Tibial artery (tissue), 4 donors: ENCODE measurements at regions of chr16 and their contacts with region 1.

Region 1: GRCh38 chr16:20866145-20866772 is 33.9 kb downstream of the DCUN1D3 start:
- DNase-seq: peak; percentile 38 to 82
- H3K4me3 ChIP-seq: peak overlapping the region in 1 of 2 donors; percentile 40
- H3K27ac ChIP-seq: peak overlapping the region; percentile 71 to 74
- H3K4me1 ChIP-seq: peaks cover 0 to 98% (median 78%) of the 10 kb centered on the region in 4 donors
- H3K27me3 ChIP-seq: no peaks in the 10 kb centered on the region
- CTCF ChIP-seq: no peak

Region 2: DNA sequence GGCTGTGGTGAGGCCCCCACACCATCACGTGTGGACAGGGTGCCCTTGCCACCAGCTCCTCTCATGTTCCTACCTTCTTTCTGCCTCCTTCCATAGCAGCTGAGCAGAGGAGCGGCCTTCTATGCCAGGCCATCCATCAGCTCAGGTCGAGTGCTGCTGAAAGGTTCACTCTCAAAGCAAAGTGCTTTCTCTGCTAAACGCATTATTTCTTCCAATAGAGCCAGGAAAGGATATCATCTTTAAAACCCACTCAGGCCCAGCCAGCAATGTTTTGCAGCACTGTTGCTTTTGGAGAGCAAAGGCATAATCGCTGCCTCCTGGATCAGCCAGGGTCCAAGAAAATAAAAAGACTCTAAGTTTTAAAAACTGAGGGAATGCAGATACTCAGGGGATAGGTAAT is 926.7 kb before region 1 on chr16:
- intact Hi-C with region 1: no loop called
- DNase-seq: no peak
- H3K4me3 ChIP-seq: no peak overlapping the region
- H3K27ac ChIP-seq: no peak overlapping the region
- H3K4me1 ChIP-seq: no peaks in the 10 kb centered on the region
- H3K27me3 ChIP-seq: no peaks in the 10 kb centered on the region
- CTCF ChIP-seq: no peak

Region 3: DNA sequence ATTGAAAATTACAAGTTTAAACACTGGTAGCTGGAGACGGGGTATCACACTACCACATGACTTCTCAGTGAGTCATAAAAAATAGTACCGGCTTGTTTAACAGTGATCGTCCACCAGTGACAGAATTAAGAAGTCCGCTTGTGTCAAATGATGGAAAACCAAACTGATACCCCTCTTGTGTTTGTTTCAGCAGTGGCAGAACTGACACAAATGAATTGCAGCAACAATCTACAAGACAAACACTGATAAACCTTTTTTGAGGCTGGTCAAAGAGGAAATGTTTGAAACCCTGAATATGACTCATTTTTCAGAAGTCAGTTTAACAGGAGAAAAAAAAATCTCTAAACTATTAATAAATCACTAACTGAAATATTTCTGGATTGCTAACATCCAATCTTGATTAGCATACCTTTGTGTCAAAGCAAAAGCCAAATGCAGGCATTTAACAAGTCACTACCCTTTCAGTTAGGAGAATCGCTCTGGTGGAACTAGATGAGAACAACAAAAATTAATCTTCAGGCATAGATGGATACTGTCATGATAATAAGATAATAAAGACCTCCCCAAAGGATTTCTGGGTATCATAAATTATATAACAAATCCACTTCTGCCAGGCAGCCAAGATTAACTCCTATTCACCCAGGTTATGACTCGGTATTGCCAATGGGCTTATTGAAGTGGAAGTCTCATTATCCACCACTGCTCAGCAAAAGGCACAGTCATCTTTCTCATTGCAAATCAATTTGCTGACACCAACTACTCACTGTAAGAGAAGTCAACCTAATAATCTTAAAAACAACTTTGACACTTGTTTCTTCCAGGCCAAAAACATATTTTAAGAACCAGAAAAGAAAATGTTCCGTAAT is 13.1 kb after region 1 on chr16:
- intact Hi-C with region 1: loop called (anchors 2 kb)
- DNase-seq: no peak
- H3K4me3 ChIP-seq: peak overlapping the region in 1 of 2 donors; percentile 25
- H3K27ac ChIP-seq: peak overlapping the region; percentile 76 to 81
- H3K4me1 ChIP-seq: peaks cover 0 to 87% (median 63%) of the 10 kb centered on the region in 4 donors
- H3K27me3 ChIP-seq: no peaks in the 10 kb centered on the region
- CTCF ChIP-seq: peak in 1 of 2 experiments; percentile 3

Region 4: DNA sequence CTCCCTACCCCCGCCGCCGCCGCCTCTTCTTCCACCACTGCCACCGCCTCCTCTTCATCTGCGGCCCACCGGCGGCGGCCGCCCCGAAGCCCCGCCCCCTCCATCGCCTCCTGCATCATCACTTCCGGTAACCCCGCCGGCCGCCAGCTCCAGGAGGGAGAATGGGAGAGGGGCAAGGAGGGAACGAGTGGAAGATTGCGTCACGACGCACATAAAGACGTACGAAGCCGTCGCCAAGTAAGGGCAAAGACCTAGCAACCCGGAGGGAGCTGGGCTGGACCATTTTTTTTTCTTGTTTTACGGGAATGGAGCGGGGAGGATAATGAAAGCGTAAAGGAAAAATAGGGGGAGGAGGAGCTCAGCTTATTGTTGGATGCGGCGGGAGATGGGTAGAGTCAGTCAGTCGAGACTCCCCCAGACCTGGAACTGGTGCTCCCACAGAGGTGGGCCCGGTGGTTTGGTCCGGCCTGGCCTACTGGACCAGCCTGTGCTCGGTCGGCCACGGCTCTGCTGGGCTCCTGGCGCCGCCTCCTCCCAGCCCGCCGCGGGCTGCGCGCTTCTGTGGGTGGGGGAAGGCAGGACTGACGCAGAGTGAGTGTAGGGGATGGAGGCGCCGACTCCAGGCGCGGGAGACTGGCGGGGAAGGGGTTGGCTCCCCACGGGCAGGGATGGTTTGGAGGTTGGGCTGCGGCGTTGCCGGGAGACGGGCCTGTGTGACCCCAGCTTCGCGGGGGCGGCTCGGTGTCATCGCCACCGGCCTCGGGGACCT is 34.2 kb after region 1 on chr16 and contains the starts of genes DCUN1D3 and LYRM1:
- intact Hi-C with region 1: loop called (anchors 5 kb)
- DNase-seq: peak; percentile 99
- H3K4me3 ChIP-seq: peak within 1 kb of the TSS; percentile 63 to 78
- H3K27ac ChIP-seq: peak within 1 kb of the TSS; percentile 96 to 98
- H3K4me1 ChIP-seq: peaks cover 0 to 79% (median 62%) of the 10 kb centered on the region in 4 donors
- H3K27me3 ChIP-seq: no peaks in the 10 kb centered on the region
- CTCF ChIP-seq: peak in 1 of 2 experiments; percentile 4